Activated CD4-positive, alpha-beta memory T cell treated with anti-CD3 and anti-CD28 coated beads for 36 hours (primary cell): ENCODE measurements at regions of chr6 and their contacts with region 1.

Region 1: GRCh38 chr6:169831450-169832246 is 80.2 kb downstream of the ERMARD start:
- DNase-seq: peak; percentile 80
- H3K4me3 Mint-ChIP-seq: no peak overlapping the region
- H3K27ac Mint-ChIP-seq: no peak overlapping the region
- H3K4me1 Mint-ChIP-seq: peaks cover 4% of the 10 kb centered on the region
- H3K27me3 Mint-ChIP-seq: peaks cover 40% of the 10 kb centered on the region

Region 2: DNA sequence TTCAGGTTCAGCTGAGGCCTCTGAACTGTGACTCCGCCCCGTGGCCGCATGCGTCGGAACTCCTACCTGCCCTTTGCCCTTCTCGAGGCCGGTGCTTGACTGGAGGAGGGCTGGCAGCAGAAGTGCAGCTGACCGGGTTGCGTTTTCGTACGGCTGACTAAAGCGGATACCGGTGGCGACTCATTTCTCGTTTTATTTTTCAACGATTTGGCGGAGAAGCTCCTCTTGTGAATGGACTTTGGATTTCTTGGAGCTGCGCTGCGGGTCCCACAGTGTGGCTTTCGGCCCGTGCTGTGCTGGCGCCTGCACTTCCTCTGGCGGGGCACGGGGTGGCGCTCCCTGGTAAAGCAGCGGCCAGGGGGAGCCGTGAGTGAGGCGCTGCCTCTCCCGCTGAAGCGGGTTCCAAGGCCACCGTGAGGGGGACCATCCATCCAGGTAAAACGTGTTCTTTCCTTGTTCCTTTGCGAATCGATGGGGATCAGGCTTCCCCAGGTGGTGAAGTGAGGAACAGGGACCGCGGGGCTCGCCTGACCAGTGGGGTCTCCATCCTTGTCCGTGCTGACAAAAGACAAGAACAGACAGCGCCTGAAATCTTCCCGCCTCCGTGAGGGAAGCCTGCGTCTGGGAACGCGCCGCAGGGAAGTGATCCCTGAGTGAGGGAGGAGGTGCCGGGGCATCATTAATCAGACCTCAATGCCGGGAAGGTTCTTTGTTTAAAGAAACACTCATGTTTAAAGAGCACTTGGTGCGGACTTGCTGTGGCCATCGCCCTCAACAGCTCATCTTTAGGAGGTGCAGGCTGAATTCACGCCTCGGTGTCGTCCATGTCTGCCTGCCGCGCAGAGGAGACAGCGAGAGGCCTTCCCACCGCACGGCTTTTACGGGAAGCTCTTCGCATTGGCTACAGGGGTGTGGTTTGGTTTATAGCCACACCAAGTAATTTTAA is 41.4 kb before region 1 on chr6:
- CTCF ChIA-PET with region 1: interaction called, 12 read pairs
- POLR2A ChIA-PET with region 1: no interaction called
- intact Hi-C with region 1: no loop called
- DNase-seq: peak; percentile 84
- H3K4me3 Mint-ChIP-seq: peak overlapping the region; percentile 78
- H3K27ac Mint-ChIP-seq: peak overlapping the region; percentile 38
- H3K4me1 Mint-ChIP-seq: peaks cover 19% of the 10 kb centered on the region
- H3K27me3 Mint-ChIP-seq: peaks cover 7% of the 10 kb centered on the region

Region 3: GRCh38 chr6:169841907-169842606 is 10.4 kb after region 1 on chr6:
- CTCF ChIA-PET with region 1: interaction called, 10 read pairs
- POLR2A ChIA-PET with region 1: no interaction called
- intact Hi-C with region 1: no loop called
- DNase-seq: no peak
- H3K4me3 Mint-ChIP-seq: no peak overlapping the region
- H3K27ac Mint-ChIP-seq: no peak overlapping the region
- H3K4me1 Mint-ChIP-seq: no peaks in the 10 kb centered on the region
- H3K27me3 Mint-ChIP-seq: peaks cover 10% of the 10 kb centered on the region

Region 4: DNA sequence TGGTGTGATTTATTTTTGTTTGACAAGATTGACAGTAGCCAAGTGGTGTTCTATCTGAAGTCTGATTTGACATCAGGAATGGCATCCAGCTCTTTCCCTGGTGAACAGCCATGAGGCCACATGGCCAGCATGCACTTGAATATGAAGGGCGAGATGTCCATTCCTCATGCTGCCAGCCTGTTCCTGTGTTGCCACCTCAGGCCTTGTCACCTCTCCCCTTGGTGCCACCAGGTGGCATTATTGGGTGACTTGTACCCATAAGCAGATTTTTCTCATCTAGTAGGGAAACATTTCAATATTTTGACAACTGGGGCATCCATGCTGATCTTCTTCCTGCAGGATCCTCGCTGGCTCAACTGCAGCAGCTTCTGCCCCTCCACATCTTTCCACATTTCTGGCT is 118.9 kb after region 1 on chr6:
- CTCF ChIA-PET with region 1: interaction called, 13 read pairs
- POLR2A ChIA-PET with region 1: no interaction called
- intact Hi-C with region 1: no loop called
- DNase-seq: peak; percentile 42
- H3K4me3 Mint-ChIP-seq: no peak overlapping the region
- H3K27ac Mint-ChIP-seq: no peak overlapping the region
- H3K4me1 Mint-ChIP-seq: no peaks in the 10 kb centered on the region
- H3K27me3 Mint-ChIP-seq: no peaks in the 10 kb centered on the region

Region 5: DNA sequence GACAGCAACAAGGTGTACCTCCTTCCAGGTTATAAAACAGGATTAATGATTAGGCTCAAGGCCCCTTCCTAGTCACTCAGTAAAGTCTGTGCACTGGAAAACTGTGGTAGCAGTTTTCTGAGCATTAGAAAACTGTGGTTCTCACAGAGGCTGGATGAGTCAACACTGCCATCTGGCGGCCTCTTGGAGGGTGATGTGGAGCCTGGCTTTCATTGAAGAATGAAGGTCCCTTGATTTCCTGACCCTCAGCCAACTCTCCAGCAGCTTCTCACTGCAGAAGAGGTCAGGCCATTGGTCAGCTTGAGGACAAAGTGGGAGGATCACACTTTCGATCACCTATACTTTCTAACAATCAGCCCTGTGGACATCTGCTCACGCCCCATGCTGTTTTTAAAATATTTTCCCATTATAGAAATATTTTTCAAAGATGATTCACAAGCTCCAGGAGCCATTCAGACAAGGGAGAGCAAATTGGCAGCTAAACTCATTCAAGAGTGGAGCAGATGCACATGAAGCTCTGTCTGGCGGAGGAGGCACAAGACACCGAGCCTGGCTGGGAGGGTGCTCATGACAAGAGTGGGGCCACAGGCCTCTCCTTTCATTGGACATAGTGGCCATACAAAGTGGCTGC is 698.3 kb after region 1 on chr6:
- CTCF ChIA-PET with region 1: interaction called, 29 read pairs
- POLR2A ChIA-PET with region 1: no interaction called
- intact Hi-C with region 1: loop called (anchors 1 kb)
- DNase-seq: peak; percentile 75
- H3K4me3 Mint-ChIP-seq: no peak overlapping the region
- H3K27ac Mint-ChIP-seq: no peak overlapping the region
- H3K4me1 Mint-ChIP-seq: no peaks in the 10 kb centered on the region
- H3K27me3 Mint-ChIP-seq: no peaks in the 10 kb centered on the region